Dendritic cell treated with granulocyte-macrophage colony-stimulating factor and Interleukin-4, amounts not matched to agents 40 ng/mL and 50 ng/mL, for 4 days (primary cell): ENCODE measurements at regions of chr4 and their contacts with region 1.

Region 1: GRCh38 chr4:17636696-17637622 is 22.5 kb downstream of the MED28 start:
- H3K4me3 Mint-ChIP-seq: no peak overlapping the region
- H3K27ac Mint-ChIP-seq: no peak overlapping the region
- H3K4me1 Mint-ChIP-seq: peaks cover 11% of the 10 kb centered on the region
- H3K27me3 Mint-ChIP-seq: no peaks in the 10 kb centered on the region

Region 2: DNA sequence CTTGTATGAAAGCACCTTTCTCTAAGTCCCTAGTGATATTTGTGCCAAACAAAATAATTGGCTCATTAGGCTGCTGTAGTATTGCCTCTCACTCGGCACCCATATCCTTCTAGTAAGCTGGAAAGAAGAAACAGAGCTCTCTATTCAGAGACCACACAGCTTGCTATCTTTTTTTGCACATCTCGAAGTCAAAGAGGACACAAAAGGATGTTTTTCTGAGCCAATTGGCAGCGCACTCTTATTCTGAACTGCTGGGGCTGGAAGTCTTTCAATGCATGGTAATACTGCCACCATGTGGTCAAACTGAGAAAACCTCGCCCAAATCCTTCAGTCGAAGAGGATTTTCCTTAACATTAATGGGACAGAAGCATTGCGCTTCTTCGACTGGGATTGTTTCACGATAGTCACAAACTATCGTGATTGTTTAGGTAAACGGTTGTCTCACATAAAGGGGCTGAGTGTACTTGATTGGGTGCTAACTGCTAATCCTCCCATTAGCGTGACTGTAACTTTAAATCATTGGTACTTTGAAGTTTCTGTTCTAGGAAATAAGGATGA is 956.6 kb after region 1 on chr4:
- intact Hi-C with region 1: loop called (anchors 10 kb)
- H3K4me3 Mint-ChIP-seq: no peak overlapping the region
- H3K27ac Mint-ChIP-seq: no peak overlapping the region
- H3K4me1 Mint-ChIP-seq: peaks cover 5% of the 10 kb centered on the region
- H3K27me3 Mint-ChIP-seq: no peaks in the 10 kb centered on the region